ENCODE measurements at regions of chr17 and their contacts with region 1.

Region 1: GRCh38 chr17:48791128-48792032 is 25.6 kb downstream of the TTLL6 start:
- DNase-seq: peak; percentile 87
- ATAC-seq: peak; percentile 92
- H3K4me3 ChIP-seq: no peak overlapping the region
- H3K27ac ChIP-seq: no peak overlapping the region
- H3K4me1 ChIP-seq: peaks cover 12 to 32% of the 10 kb centered on the region in 2 experiments
- H3K27me3 ChIP-seq: no peaks in the 10 kb centered on the region
- CTCF ChIP-seq: peak; percentile 94 to 98 (median 98)
- POLR2A ChIP-seq: no peak
- RAD21 ChIP-seq: peak; percentile 97

Region 2: DNA sequence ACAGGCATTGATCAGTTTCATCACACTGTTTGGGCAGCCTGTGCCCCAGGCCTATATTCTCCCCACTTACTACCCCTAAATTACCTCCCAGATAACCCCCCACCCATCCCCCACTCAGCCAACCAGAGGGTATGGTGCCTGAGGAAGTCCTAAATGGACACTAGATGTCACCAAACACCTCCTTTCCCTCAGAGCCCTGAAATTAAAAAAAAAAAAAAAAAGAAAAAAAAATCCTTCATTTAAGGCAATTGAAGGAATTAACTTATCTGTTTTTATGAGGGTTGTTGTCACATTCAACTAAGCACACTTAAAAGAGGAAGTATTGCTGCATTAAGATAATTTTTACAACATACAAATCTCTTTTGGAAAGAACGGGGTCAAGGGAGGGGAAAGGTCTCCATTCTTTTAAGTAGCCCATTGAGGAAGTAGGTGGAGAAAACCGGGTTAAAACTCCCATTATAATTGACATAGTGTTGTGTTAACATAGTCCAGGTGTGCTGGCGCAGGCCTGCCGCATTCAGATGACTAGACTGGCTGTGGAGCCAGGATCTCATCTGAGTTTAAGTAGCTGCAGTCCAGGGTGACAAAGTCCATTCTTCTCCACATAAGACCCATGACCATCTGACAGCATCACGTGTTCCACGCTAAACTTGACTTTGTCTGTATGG is 637.6 kb before region 1 on chr17:
- CTCF ChIA-PET with region 1: no interaction called
- POLR2A ChIA-PET with region 1: no interaction called
- RAD21 ChIA-PET with region 1: no interaction called
- intact Hi-C with region 1: loop called (anchors 10 kb)
- DNase-seq: peak; percentile 45
- ATAC-seq: peak; percentile 95
- H3K4me3 ChIP-seq: no peak overlapping the region
- H3K27ac ChIP-seq: no peak overlapping the region
- H3K4me1 ChIP-seq: peaks cover 3 to 6% of the 10 kb centered on the region in 2 experiments; a peak in 3 of 4 replicates
- H3K27me3 ChIP-seq: peaks cover 25% of the 10 kb centered on the region; the same call in 1 of the 2 replicates
- CTCF ChIP-seq: peak; percentile 80 to 87 (median 83)
- POLR2A ChIP-seq: no peak
- RAD21 ChIP-seq: peak; percentile 86

Region 3: GRCh38 chr17:48427598-48427997 is 363.8 kb before region 1 on chr17:
- CTCF ChIA-PET with region 1: no interaction called
- POLR2A ChIA-PET with region 1: no interaction called
- RAD21 ChIA-PET with region 1: no interaction called
- intact Hi-C with region 1: no loop called
- DNase-seq: no peak
- ATAC-seq: no peak
- H3K4me3 ChIP-seq: no peak overlapping the region
- H3K27ac ChIP-seq: no peak overlapping the region
- H3K4me1 ChIP-seq: peaks cover 0 to 26% of the 10 kb centered on the region in 2 experiments; a peak in 2 of 4 replicates
- H3K27me3 ChIP-seq: no peaks in the 10 kb centered on the region
- CTCF ChIP-seq: no peak
- POLR2A ChIP-seq: no peak
- RAD21 ChIP-seq: no peak

Region 4: DNA sequence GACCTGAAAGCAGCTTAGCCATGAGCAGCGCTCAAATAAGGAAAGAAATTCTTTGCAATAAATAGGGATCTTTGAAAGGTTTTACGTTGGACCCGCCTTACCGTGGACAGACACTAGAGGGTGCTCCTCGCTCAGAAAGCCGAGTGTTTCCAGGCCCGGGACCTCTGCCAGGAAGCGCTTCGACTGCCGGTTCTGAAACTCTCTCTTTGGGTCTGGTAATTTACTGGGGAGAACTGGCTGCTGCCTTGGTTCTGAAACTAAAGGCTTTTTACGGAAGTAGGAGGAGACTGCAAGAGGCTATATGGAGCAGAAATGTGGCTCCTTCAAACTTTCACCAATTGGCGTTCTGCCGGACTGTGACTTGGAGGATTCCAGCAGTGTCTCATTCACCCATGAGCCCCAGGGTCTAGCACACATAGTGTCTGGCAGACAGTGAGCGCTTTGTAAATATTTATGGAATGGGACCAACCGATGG is 119.6 kb before region 1 on chr17:
- CTCF ChIA-PET with region 1: interaction called, 22 read pairs
- POLR2A ChIA-PET with region 1: no interaction called
- RAD21 ChIA-PET with region 1: no interaction called
- intact Hi-C with region 1: loop called (anchors 2 kb)
- DNase-seq: peak; percentile 59
- ATAC-seq: peak; percentile 87
- H3K4me3 ChIP-seq: peak overlapping the region; percentile 21 to 52
- H3K27ac ChIP-seq: no peak overlapping the region
- H3K4me1 ChIP-seq: peaks cover 0 to 10% of the 10 kb centered on the region in 2 experiments; a peak in 3 of 4 replicates
- H3K27me3 ChIP-seq: no peaks in the 10 kb centered on the region
- CTCF ChIP-seq: peak; percentile 92 to 99 (median 98)
- POLR2A ChIP-seq: no peak
- RAD21 ChIP-seq: peak; percentile 94

Region 5: GRCh38 chr17:49815761-49816281 is 1024.4 kb after region 1 on chr17:
- CTCF ChIA-PET with region 1: no interaction called
- POLR2A ChIA-PET with region 1: no interaction called
- RAD21 ChIA-PET with region 1: no interaction called
- intact Hi-C with region 1: no loop called
- DNase-seq: no peak
- ATAC-seq: no peak
- H3K4me3 ChIP-seq: no peak overlapping the region
- H3K27ac ChIP-seq: no peak overlapping the region
- H3K4me1 ChIP-seq: no peaks in the 10 kb centered on the region
- H3K27me3 ChIP-seq: no peaks in the 10 kb centered on the region
- CTCF ChIP-seq: no peak
- POLR2A ChIP-seq: no peak
- RAD21 ChIP-seq: no peak